ENCODE measurements at regions of chr19 and their contacts with region 1.

Region 1: GRCh38 chr19:35154525-35155406 is at the start of gene FXYD5:
- DNase-seq: peak; percentile 80
- CTCF ChIP-seq: no peak

Region 2: DNA sequence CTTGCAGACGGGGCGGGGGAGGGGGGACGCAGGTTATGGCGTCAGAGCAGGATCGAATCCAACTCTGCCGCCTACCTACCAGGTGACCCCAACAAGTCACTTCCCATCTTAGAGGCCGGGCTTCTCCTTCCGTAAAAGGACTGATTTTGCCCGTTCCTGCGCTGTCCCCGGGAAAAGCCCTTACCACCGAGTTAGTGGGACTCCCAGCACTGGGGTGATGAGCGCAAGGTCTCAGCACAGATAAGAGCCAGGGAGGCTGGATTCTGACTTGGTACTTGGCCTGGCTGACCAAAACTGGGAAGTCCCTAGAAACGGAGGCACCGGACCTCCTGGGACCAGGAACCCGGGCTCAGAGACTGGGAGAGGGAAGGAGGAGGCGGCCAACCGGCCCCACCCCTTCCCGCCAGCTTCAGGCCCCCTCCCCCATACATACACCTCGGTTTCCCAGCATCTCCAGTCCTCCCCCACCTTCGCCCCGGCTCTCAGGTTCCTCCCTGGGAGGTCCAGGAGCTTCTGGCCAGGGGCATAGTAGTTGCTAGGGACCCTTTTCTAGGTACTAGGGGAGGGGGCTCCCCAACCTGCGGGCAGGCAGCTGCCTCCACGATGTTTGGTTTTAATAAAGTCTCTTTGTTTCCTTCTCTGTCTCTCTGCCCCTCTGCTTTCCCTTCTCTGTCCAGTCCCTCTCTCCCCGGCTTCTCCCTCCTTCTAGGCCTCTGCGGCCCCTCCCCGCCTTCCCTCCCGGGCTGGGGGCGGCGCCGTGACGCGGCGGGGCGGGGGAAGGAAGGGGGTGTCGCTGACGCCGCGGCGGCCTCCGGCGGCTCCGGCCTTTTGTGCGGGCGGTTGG is 155.0 kb before region 1 on chr19 and contains the start of gene GRAMD1A:
- CTCF ChIA-PET with region 1: no interaction called
- POLR2A ChIA-PET with region 1: no interaction called
- DNase-seq: peak; percentile 93
- CTCF ChIP-seq: no peak

Region 3: DNA sequence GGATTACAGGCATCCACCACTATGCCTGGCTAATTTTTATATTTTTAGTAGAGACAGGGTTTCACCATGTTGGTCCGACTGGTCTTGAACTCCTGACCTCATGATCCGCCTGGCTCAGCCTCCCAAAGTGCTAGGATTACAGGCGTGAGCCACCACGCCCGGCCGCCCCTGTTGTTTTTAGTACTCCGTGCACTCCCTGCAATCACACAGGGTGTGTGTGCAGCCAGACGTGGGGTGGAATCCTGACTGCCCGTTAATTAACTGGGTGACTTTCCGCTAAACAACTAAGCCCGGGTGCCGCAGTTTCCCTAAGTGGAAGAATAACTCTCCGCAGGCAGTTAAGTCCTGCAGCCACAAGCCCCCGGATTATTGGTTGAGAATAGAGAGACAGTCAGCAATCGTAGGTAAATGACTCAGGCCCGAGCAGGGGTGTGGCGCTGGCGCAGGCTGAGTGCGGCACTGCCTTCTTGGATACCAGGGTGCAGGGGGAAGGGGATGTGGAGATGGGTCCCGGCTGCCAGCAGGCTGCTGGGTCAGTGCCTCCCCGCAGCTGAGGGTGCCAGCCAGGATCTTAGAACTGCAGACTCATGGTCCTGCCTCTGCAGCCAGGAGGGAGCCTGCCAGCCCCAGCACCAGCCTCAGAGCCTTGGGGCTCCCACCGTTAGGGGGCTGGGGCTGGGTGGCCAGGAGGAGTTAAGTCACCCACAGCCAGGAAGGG is 45.2 kb before region 1 on chr19:
- CTCF ChIA-PET with region 1: no interaction called
- POLR2A ChIA-PET with region 1: no interaction called
- DNase-seq: no peak
- CTCF ChIP-seq: no peak

Region 4: GRCh38 chr19:35140962-35141637 is 13.7 kb before region 1 on chr19:
- CTCF ChIA-PET with region 1: interaction called, 39 read pairs
- POLR2A ChIA-PET with region 1: no interaction called
- DNase-seq: peak; percentile 100
- CTCF ChIP-seq: peak; percentile 60

Region 5: GRCh38 chr19:35229601-35230000 is 74.8 kb after region 1 on chr19:
- CTCF ChIA-PET with region 1: no interaction called
- POLR2A ChIA-PET with region 1: no interaction called
- DNase-seq: no peak
- CTCF ChIP-seq: no peak